Activated naive CD4-positive, alpha-beta T cell treated with anti-CD3 and anti-CD28 coated beads, Interleukin-2, amount 10 ng/mL, durations not matched to agents 7 days and 5 days (primary cell): ENCODE measurements at regions of chr4 and their contacts with region 1.

Region 1: GRCh38 chr4:102449751-102450352 is 51.3 kb upstream of the NFKB1 start:
- DNase-seq: peak; percentile 69
- H3K4me3 Mint-ChIP-seq: no peak overlapping the region
- H3K27ac Mint-ChIP-seq: no peak overlapping the region
- H3K4me1 Mint-ChIP-seq: peaks cover 33% of the 10 kb centered on the region
- H3K27me3 Mint-ChIP-seq: no peaks in the 10 kb centered on the region

Region 2: DNA sequence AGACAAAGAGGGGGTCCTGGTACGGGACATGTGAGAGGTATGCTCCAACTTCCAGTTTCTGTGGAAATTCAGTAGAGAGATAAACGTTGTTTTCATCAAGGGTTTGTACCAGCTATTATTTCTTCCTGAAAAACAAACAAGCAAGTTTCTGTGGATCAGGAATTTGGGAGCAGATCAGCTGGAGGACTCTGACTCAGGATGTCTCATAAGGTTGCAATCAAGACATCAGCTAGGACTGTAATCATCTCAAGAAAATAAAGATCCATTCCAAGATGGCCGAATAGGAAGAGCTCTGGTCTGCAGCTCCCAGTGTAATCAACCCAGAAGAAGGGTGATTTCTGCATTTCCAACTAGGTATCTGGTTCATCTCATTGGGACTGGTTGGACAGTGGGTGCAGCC is 27.8 kb after region 1 on chr4:
- CTCF ChIA-PET with region 1: no interaction called
- DNase-seq: no peak
- H3K4me3 Mint-ChIP-seq: no peak overlapping the region
- H3K27ac Mint-ChIP-seq: no peak overlapping the region
- H3K4me1 Mint-ChIP-seq: no peaks in the 10 kb centered on the region
- H3K27me3 Mint-ChIP-seq: peaks cover 6% of the 10 kb centered on the region

Region 3: GRCh38 chr4:102627831-102628523 is 178.1 kb after region 1 on chr4:
- CTCF ChIA-PET with region 1: interaction called, 21 read pairs
- DNase-seq: no peak
- H3K4me3 Mint-ChIP-seq: no peak overlapping the region
- H3K27ac Mint-ChIP-seq: no peak overlapping the region
- H3K4me1 Mint-ChIP-seq: peaks cover 75% of the 10 kb centered on the region
- H3K27me3 Mint-ChIP-seq: no peaks in the 10 kb centered on the region